Mammary epithelial cell (primary cell): ENCODE measurements at regions of chr7 and their contacts with region 1.

Region 1: GRCh38 chr7:2241580-2242540 is at the starts of genes MRM2 and NUDT1:
- DNase-seq: peak; percentile 79
- H3K4me3 ChIP-seq: peak within 1 kb of the TSS; percentile 91 to 95 (median 93)
- H3K27ac ChIP-seq: peak within 1 kb of the TSS; percentile 41
- H3K4me1 ChIP-seq: peaks cover 27% of the 10 kb centered on the region
- H3K27me3 ChIP-seq: no peaks in the 10 kb centered on the region
- CTCF ChIP-seq: no peak
- total RNA-seq, gene MRM2: 14.0 to 29.9 TPM
- total RNA-seq, gene NUDT1: 5.7 to 26.4 TPM

Region 2: GRCh38 chr7:2314209-2314955 is 72.5 kb after region 1 on chr7 and contains the start of gene SNX8:
- CTCF ChIA-PET with region 1: no interaction called
- dilution Hi-C with region 1: no loop called
- in situ Hi-C with region 1: no loop called
- intact Hi-C with region 1: loop called (anchors 5 kb)
- DNase-seq: peak; percentile 90
- H3K4me3 ChIP-seq: peak within 1 kb of the TSS; percentile 80 to 94 (median 91)
- H3K27ac ChIP-seq: no peak within 1 kb of the TSS
- H3K4me1 ChIP-seq: no peaks in the 10 kb centered on the region
- H3K27me3 ChIP-seq: no peaks in the 10 kb centered on the region
- CTCF ChIP-seq: no peak
- total RNA-seq, gene SNX8: 7.5 to 25.2 TPM